Transverse colon (tissue), 4 donors: ENCODE measurements at regions of chr2 and their contacts with region 1.

Region 1: DNA sequence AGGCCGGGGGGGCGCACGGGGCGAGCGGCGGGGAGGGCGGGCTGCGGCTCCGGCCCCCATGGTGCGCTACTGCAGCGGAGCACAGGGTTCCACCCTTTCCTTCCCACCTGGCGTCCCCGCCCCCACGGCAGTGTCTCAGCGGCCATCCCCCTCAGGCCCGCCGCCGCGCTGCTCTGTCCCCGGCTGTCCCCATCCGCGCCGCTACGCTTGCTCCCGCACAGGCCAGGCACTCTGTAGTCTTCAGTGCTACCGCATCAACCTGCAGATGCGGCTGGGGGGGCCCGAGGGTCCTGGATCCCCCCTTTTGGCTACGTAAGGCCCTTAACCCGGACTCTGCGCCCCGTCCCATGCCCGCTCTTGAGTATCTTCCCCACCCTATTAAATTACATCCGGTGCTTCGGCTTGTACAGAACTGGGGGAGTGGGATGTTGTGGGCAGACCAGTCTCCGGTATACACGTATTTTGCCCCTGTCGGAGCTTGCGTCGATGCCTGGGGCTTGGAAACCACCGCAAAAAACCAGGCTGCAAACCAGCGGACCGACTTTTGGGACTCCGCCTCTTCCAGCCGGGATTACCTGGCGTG is 598 bp upstream of the WBP1 start:
- DNase-seq: peak; percentile 86
- H3K4me3 ChIP-seq: peak overlapping the region; percentile 55 to 70 (median 63)
- H3K27ac ChIP-seq: peak overlapping the region; percentile 96 to 99 (median 98)
- H3K4me1 ChIP-seq: peaks cover 21 to 32% (median 27%) of the 10 kb centered on the region in 4 donors
- H3K27me3 ChIP-seq: no peaks in the 10 kb centered on the region
- CTCF ChIP-seq: peak in 1 of 5 experiments; percentile 20
- EP300 ChIP-seq: no peak
- POLR2A ChIP-seq: peak; percentile 93

Region 2: DNA sequence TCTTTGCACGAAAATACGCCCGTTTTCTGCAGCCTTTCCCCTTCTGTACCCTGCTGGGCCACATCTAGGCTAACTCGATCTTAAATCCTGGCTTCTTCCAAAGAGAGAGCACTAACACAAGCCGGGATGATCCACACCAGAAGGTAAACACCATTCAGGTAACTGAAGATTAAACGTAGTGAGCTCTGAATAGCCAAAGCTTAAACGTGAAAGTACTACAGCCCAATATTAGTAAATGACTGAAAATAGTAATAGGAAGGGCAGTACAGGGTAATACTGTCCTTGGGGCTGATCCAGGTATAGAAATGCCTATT is 15.3 kb after region 1 on chr2:
- in situ Hi-C with region 1: no loop called
- intact Hi-C with region 1: loop called (anchors 1 kb)
- DNase-seq: no peak
- H3K4me3 ChIP-seq: peak overlapping the region; percentile 39 to 87 (median 60)
- H3K27ac ChIP-seq: peak overlapping the region; percentile 89 to 99 (median 91)
- H3K4me1 ChIP-seq: peaks cover 12 to 23% (median 15%) of the 10 kb centered on the region in 4 donors
- H3K27me3 ChIP-seq: no peaks in the 10 kb centered on the region
- CTCF ChIP-seq: no peak
- EP300 ChIP-seq: no peak
- POLR2A ChIP-seq: no peak